Mammary epithelial cell (primary cell): ENCODE measurements at regions of chr5 and their contacts with region 1.

Region 1: DNA sequence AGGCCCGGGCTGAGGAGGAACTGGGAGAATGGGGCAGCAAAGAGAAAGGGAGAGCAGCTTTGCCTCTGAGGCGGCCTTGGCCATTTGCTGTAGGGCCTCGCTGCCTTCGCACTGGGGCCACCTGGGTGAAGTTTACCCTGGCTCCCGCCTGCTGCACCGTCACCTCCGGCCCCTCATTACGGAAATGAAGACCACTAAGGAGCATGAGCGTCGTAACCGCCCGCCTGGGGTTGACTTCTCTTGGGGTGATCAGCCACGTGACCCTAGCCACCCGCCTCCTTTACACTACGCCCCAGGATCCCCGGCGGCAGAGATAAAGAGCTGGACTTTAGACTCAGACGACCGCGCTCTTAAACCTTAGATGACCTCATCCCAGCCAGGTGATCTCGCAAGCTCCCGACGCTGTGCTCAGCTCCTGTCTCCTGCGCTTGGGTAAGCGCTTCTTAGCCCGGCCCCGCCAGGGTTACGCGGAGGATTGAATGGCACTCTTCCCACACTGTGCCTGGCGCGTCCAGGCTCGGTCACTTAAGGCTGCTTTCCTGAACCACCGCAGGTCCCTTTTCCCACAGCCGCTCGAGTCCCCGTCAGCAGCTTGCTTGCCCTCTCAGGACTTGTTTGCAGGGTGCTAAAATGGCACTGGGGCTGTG is 107.9 kb upstream of the LARP1 start:
- DNase-seq: peak; percentile 17
- H3K4me3 ChIP-seq: no peak overlapping the region
- H3K27ac ChIP-seq: no peak overlapping the region
- H3K4me1 ChIP-seq: peaks cover 6% of the 10 kb centered on the region
- H3K27me3 ChIP-seq: peaks cover 2% of the 10 kb centered on the region
- CTCF ChIP-seq: no peak

Region 2: GRCh38 chr5:153974131-153974812 is 673.0 kb before region 1 on chr5:
- CTCF ChIA-PET with region 1: no interaction called
- dilution Hi-C with region 1: no loop called
- in situ Hi-C with region 1: loop called in 1 of 2 experiments (anchors 25 kb)
- intact Hi-C with region 1: no loop called
- DNase-seq: peak; percentile 25
- H3K4me3 ChIP-seq: no peak overlapping the region
- H3K27ac ChIP-seq: no peak overlapping the region
- H3K4me1 ChIP-seq: no peaks in the 10 kb centered on the region
- H3K27me3 ChIP-seq: no peaks in the 10 kb centered on the region
- CTCF ChIP-seq: peak; percentile 72 to 75

Region 3: DNA sequence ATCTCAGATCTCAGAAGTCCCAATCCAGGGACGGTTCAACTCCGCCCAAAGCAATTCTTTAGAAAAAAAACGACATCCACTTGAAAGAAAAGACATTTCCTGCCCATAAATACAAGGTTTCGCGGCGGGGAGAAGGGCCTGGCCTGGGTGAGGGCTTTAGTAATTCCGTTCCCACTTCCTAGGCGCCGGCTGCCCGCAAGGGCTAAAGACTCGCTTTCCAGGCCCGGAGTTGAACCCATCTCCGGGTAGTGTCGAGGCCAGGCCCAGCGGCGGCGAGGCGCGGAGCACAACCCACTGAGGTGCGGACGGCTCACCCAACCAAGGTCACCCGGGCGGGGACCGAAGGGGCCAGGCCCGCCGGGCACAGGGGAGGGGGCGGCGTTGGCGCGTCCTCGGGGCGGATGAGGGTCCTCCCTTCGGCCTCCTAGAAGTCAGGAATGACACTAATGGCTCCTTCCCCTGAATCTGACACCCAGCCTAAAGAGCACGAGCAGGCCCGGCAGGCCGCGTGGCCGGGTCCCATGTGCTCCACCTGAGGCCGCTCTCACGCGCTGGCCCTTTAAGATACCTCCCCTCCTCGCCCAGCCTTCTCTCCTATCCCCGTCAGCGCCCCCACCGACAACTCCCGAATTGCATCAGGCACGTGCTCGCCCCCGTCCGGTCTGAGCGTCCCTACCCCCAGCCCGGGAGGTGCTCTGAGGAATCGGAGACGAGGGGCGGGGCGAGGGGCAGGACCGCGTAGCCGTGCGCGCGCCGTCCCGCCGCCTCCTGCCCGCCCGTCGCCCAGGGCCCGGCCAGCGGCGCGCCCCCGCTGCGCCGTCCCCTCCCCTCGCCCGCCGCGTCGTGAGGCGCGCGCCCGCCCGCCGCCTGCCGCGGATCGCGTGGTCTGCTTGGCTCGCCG is 107.5 kb after region 1 on chr5:
- CTCF ChIA-PET with region 1: no interaction called
- dilution Hi-C with region 1: no loop called
- in situ Hi-C with region 1: no loop called
- intact Hi-C with region 1: loop called (anchors 2 kb)
- DNase-seq: peak; percentile 99
- H3K4me3 ChIP-seq: peak overlapping the region; percentile 37 to 95 (median 88)
- H3K27ac ChIP-seq: peak overlapping the region; percentile 83
- H3K4me1 ChIP-seq: peaks cover 30% of the 10 kb centered on the region
- H3K27me3 ChIP-seq: no peaks in the 10 kb centered on the region
- CTCF ChIP-seq: peak in 1 of 2 donors; percentile 51

Region 4: DNA sequence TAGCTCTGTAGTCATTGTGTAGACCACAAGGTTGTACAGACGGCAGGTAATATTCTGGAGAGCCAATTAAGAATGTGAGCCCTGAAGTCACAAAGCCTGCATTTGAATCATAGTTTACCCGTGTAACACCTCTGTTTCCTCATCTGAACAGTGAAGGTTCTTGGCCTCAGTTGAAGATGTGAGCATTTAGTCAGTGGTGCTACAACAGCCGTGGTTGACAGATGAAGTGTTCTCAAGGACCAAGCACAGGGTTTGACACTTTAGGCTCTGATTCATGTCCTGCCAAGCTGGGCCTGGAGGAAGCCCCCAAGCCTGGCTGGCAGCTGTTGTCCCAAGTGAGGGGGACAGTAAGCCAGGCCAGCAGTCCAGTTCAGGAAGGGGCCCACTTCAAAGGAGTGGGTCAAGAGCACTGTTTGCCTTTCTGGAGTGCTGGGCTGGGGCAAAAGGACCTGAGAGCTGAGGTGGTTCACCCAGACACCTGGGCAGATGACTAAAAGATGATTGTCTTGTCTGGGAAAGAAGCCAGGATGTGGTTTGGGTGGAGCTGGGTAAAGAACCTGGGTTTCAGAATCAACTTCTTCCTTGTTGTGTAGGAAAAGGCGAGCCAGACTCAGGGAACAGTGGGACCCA is 182.5 kb after region 1 on chr5:
- CTCF ChIA-PET with region 1: no interaction called
- dilution Hi-C with region 1: loop called (anchors 10 kb)
- in situ Hi-C with region 1: no loop called
- intact Hi-C with region 1: no loop called
- DNase-seq: peak; percentile 97
- H3K4me3 ChIP-seq: peak overlapping the region in 1 of 3 experiments; percentile 16
- H3K27ac ChIP-seq: peak overlapping the region; percentile 82
- H3K4me1 ChIP-seq: peaks cover 45% of the 10 kb centered on the region
- H3K27me3 ChIP-seq: no peaks in the 10 kb centered on the region
- CTCF ChIP-seq: no peak

Region 5: GRCh38 chr5:154901276-154901675 is 254.0 kb after region 1 on chr5:
- CTCF ChIA-PET with region 1: no interaction called
- dilution Hi-C with region 1: loop called (anchors 10 kb)
- in situ Hi-C with region 1: no loop called
- intact Hi-C with region 1: loop called (anchors 10 kb)
- DNase-seq: no peak
- H3K4me3 ChIP-seq: no peak overlapping the region
- H3K27ac ChIP-seq: no peak overlapping the region
- H3K4me1 ChIP-seq: no peaks in the 10 kb centered on the region
- H3K27me3 ChIP-seq: no peaks in the 10 kb centered on the region
- CTCF ChIP-seq: no peak

Region 6: GRCh38 chr5:155004138-155004744 is 357.0 kb after region 1 on chr5:
- CTCF ChIA-PET with region 1: interaction called, 4 read pairs
- dilution Hi-C with region 1: no loop called
- in situ Hi-C with region 1: loop called in 1 of 2 experiments (anchors 25 kb)
- intact Hi-C with region 1: loop called (anchors 1 kb)
- DNase-seq: peak; percentile 39
- H3K4me3 ChIP-seq: no peak overlapping the region
- H3K27ac ChIP-seq: no peak overlapping the region
- H3K4me1 ChIP-seq: peaks cover 6% of the 10 kb centered on the region
- H3K27me3 ChIP-seq: no peaks in the 10 kb centered on the region
- CTCF ChIP-seq: peak; percentile 69 to 90